K562 (cell line): ENCODE measurements at regions of chr9 and their contacts with region 1.

Region 1: GRCh38 chr9:14466429-14466818 is 152.5 kb upstream of the NFIB start:
- DNase-seq: no peak
- ATAC-seq: no peak
- H3K4me3 ChIP-seq: no peak overlapping the region
- H3K27ac ChIP-seq: no peak overlapping the region
- H3K4me1 ChIP-seq: no peaks in the 10 kb centered on the region; a peak in 1 of 5 replicates
- H3K27me3 ChIP-seq: no peaks in the 10 kb centered on the region
- CTCF ChIP-seq: no peak
- EP300 ChIP-seq: no peak
- POLR2A ChIP-seq: no peak
- RAD21 ChIP-seq: no peak

Region 2: GRCh38 chr9:14616188-14616982 is 150.0 kb after region 1 on chr9:
- CTCF ChIA-PET with region 1: interaction called, 3 read pairs
- POLR2A ChIA-PET with region 1: no interaction called
- in situ Hi-C with region 1: no loop called
- intact Hi-C with region 1: loop called (anchors 5 kb)
- DNase-seq: peak in 2 of 4 experiments; percentile 16 to 52
- ATAC-seq: peak; percentile 77
- H3K4me3 ChIP-seq: no peak overlapping the region
- H3K27ac ChIP-seq: no peak overlapping the region
- H3K4me1 ChIP-seq: no peaks in the 10 kb centered on the region
- H3K27me3 ChIP-seq: no peaks in the 10 kb centered on the region
- CTCF ChIP-seq: peak; percentile 32 to 62 (median 50); a peak in 5 of 6 replicates
- EP300 ChIP-seq: no peak
- POLR2A ChIP-seq: no peak
- RAD21 ChIP-seq: peak; percentile 42 to 62; a peak in 3 of 4 replicates

Region 3: GRCh38 chr9:14652729-14653377 is 186.4 kb after region 1 on chr9:
- CTCF ChIA-PET with region 1: interaction called, 4 read pairs
- POLR2A ChIA-PET with region 1: no interaction called
- in situ Hi-C with region 1: loop called (anchors 5 kb)
- intact Hi-C with region 1: loop called (anchors 1 kb)
- DNase-seq: peak in 3 of 4 experiments; percentile 4 to 25 (median 11)
- ATAC-seq: peak; percentile 74
- H3K4me3 ChIP-seq: no peak overlapping the region
- H3K27ac ChIP-seq: no peak overlapping the region
- H3K4me1 ChIP-seq: no peaks in the 10 kb centered on the region
- H3K27me3 ChIP-seq: no peaks in the 10 kb centered on the region
- CTCF ChIP-seq: peak; percentile 35 to 55 (median 43); a peak in 4 of 6 replicates
- EP300 ChIP-seq: no peak
- POLR2A ChIP-seq: no peak
- RAD21 ChIP-seq: peak; percentile 56 to 82